ENCODE measurements at regions of chr17 and their contacts with region 1.

Region 1: DNA sequence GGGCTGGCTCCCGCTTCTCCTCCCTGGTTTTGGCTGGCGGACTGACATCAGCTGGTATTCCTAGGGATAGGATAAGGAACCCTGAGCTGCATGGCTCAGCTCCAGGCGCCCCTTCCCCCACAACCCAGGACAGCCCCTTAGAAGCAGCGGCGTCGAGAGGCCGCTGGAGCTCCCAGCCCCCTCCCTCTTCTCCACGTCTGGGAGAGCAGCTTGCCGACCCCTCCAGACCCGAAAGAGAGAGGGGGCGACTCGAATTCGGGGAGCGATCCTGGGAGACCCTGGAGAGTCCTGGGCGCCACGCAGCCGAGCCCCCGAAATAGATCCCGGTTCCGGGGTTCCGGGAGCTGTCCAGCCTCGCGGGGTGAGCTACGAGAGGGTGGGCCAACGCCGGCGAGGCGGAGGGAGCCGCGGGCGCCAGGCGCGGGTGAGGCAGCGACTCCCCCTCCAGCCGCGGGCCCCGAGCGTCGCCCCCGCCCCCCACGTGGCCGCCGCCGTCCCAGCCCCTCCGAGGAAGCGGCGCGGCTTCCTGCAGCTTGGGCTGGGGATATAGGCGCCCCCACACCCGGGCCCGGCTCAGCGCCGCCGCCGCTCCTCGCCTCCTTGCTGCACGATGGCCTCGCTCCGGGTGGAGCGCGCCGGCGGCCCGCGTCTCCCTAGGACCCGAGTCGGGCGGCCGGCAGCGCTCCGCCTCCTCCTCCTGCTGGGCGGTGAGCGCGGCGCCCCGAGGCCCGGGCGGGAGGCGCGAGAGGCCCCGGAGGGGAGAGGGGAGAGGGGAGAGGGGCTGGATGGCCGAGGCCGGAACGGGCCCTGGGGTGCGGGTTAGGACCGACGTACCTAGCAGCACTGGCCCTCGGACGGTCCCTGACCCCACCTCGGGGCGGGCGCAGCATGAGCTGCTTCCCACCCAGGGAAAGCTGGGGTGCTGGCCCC is at the start of gene RAMP2:
- DNase-seq: no peak
- H3K4me3 ChIP-seq: peak within 1 kb of the TSS; percentile 25 to 45
- H3K27ac ChIP-seq: peak within 1 kb of the TSS; percentile 63 to 82
- H3K4me1 ChIP-seq: peaks cover 0 to 12% of the 10 kb centered on the region in 2 donors
- H3K27me3 ChIP-seq: peaks cover 0 to 3% of the 10 kb centered on the region in 2 donors
- CTCF ChIP-seq: no peak
- POLR2A ChIP-seq: no peak
- total RNA-seq, gene RAMP2: 13.7 to 52.2 (median 29.2) TPM

Region 2: GRCh38 chr17:42586514-42587230 is 174.2 kb before region 1 on chr17:
- intact Hi-C with region 1: loop called (anchors 10 kb)
- DNase-seq: no peak
- H3K4me3 ChIP-seq: no peak overlapping the region
- H3K27ac ChIP-seq: no peak overlapping the region
- H3K4me1 ChIP-seq: no peaks in the 10 kb centered on the region
- H3K27me3 ChIP-seq: no peaks in the 10 kb centered on the region
- CTCF ChIP-seq: no peak
- POLR2A ChIP-seq: no peak

Region 3: DNA sequence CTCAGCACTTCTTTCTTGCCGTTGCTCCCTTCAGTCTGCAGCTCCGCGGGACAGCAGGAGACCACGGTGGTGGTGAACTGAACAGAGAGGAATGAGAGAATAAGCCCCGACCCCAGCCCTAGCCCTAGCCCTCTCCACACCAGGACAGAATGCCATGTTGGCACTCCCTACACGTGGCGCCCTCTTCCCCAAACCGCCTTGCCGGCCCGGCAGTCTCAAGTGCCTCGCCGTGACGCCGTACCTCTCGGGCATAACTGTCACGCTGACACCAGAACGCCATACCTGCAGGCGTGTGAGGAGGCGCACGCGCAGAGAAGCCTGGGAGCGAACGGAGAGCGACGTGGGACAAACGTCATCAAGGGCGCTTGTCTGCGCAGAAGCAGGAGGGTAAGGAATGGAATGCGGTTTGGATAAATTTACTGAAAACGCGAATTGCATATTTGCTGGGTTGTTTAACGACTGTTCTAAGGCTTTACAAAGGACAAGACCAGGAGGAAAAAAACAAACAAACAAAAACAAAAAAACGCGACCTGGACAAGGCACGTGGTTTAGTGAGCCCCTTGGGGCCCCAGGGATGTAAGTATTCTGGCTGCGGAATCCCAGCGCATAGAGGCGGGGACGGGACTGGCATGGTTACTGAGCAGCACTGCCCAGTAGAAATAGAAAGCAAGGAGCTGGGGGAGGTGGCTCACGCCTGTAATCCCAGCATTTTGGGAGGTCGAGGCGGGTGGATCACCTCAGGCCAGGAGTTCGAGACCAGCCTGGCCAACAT is 203.4 kb after region 1 on chr17 and contains the start of gene AARSD1:
- intact Hi-C with region 1: no loop called
- DNase-seq: peak; percentile 88 to 90
- H3K4me3 ChIP-seq: peak within 1 kb of the TSS; percentile 57 to 74
- H3K27ac ChIP-seq: peak within 1 kb of the TSS; percentile 89 to 91
- H3K4me1 ChIP-seq: no peaks in the 10 kb centered on the region
- H3K27me3 ChIP-seq: no peaks in the 10 kb centered on the region
- CTCF ChIP-seq: peak in 2 of 4 experiments; percentile 8 to 48
- POLR2A ChIP-seq: peak; percentile 44 to 72
- total RNA-seq, gene AARSD1: 5.6 to 69.9 (median 32.6) TPM

Measured in uterus (tissue), 4 donors.